ENCODE measurements at regions of chr11 and their contacts with region 1.

Region 1: DNA sequence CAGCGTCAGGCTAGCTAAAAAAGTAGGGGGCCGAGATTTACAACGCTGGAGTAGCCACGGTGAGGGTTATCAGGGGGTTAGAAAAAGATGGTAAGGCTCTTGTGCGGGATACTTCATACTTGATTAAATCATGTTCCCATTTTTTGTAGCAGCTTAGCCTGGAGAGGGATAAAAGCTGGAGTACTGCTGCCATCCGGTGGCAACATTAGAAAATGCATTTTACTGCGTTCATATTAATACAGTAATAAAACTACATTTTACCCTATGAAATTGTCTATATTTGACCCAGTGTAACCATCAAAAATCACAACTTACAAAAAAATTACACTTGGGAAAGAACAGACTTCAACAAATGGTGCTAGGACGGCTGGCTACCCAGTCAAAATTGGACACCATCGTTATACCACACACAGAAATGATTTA is 17.3 kb downstream of the RPUSD4 start:
- DNase-seq: peak in 2 of 4 donors; percentile 48 to 66
- ATAC-seq: peak; percentile 86
- H3K4me3 ChIP-seq: no peak overlapping the region
- H3K27ac ChIP-seq: no peak overlapping the region
- H3K4me1 ChIP-seq: no peaks in the 10 kb centered on the region
- H3K27me3 ChIP-seq: no peaks in the 10 kb centered on the region
- CTCF ChIP-seq: peak; percentile 40 to 56

Region 2: DNA sequence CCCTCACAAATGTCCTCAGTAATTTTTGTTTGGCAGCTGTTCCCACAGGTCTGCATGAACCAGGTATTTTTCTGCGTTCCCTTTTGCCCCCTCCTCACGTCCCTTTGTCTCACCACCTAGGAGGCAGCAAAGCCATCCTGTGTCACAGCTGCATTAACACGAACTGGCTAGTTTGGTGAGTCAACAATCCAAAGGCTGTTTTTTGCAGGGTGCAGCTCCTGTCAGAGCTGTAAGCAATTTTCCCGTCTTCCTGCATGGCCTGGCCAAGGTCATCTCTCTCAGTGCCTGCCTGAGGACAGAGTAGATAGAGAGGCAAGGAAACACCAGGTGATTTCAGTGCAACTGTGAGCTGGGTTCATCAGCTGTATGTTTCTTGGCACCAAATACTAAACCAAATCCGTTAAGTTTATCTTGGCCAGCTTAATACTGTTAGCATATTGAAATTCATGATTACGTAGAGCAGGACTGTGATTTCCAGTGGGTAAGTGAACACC is 268.8 kb before region 1 on chr11:
- intact Hi-C with region 1: loop called (anchors 5 to 10 kb)
- DNase-seq: no peak
- ATAC-seq: no peak
- H3K4me3 ChIP-seq: no peak overlapping the region
- H3K27ac ChIP-seq: no peak overlapping the region
- H3K4me1 ChIP-seq: no peaks in the 10 kb centered on the region
- H3K27me3 ChIP-seq: no peaks in the 10 kb centered on the region
- CTCF ChIP-seq: no peak

Region 3: GRCh38 chr11:125939081-125939521 is 255.0 kb before region 1 on chr11:
- intact Hi-C with region 1: loop called in 1 of 2 experiments (anchors 10 kb)
- DNase-seq: peak in 2 of 4 donors; percentile 44 to 51
- ATAC-seq: peak; percentile 71
- H3K4me3 ChIP-seq: no peak overlapping the region
- H3K27ac ChIP-seq: no peak overlapping the region
- H3K4me1 ChIP-seq: no peaks in the 10 kb centered on the region
- H3K27me3 ChIP-seq: no peaks in the 10 kb centered on the region
- CTCF ChIP-seq: no peak